Heart right ventricle (tissue), 16 donors: ENCODE measurements at regions of chr17 and their contacts with region 1.

Region 1: GRCh38 chr17:15422392-15422957 is 44.9 kb downstream of the CDRT4 start:
- DNase-seq: no peak
- ATAC-seq: peak in 1 of 8 donors; percentile 46
- H3K4me3 ChIP-seq: no peak overlapping the region
- H3K27ac ChIP-seq: no peak overlapping the region
- H3K4me1 ChIP-seq: no peaks in the 10 kb centered on the region
- H3K27me3 ChIP-seq: no peaks in the 10 kb centered on the region
- CTCF ChIP-seq: no peak

Region 2: DNA sequence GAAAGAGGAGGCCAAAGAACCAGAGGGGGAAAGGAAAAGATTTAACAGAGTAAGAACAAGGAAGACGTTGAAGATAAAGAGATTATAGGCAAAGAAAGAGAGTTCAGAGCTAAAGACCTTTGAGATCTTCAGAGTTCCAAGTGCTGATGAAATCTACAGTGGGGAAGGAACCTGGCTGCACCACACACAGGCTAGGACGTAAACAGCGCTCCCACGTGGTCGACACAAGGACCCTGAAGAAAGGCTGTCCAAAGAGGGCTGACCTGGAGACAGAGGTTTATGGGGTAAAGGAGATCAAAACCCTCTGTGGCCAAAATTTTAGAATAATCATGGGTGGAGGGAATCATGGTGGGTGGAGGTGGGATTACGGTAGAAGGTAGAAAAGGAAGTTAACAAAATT is 279.0 kb before region 1 on chr17:
- intact Hi-C with region 1: no loop called
- DNase-seq: no peak
- ATAC-seq: no peak
- H3K4me3 ChIP-seq: no peak overlapping the region
- H3K27ac ChIP-seq: no peak overlapping the region
- H3K4me1 ChIP-seq: no peaks in the 10 kb centered on the region
- H3K27me3 ChIP-seq: no peaks in the 10 kb centered on the region
- CTCF ChIP-seq: no peak

Region 3: DNA sequence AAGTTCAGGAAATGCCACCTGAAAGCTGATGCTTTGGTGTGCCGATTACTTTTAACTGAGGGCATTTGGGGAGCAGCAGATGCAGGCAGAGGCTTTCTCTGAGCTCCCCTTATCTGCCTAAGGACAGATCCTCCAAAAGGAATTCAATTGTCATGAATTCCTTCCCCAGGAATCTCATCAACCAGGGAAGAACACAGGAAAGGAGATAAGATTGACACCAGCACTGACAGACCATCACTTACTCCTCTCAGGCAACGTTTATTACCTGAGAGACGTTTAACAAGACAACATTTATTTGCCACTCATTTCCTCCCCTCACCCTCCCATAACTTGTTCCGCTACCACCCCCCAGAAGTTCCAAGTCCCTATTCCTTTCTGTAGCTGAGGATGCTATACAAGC is 62.6 kb after region 1 on chr17:
- intact Hi-C with region 1: loop called in 1 of 10 experiments (anchors 5 kb)
- DNase-seq: no peak
- ATAC-seq: no peak
- H3K4me3 ChIP-seq: no peak overlapping the region
- H3K27ac ChIP-seq: no peak overlapping the region
- H3K4me1 ChIP-seq: peaks cover 0 to 5% (median under 1%) of the 10 kb centered on the region in 9 donors
- H3K27me3 ChIP-seq: no peaks in the 10 kb centered on the region
- CTCF ChIP-seq: no peak